ENCODE measurements at regions of chr3 and their contacts with region 1.

Region 1: GRCh38 chr3:112013058-112013783 is 14.5 kb downstream of the TAGLN3 start:
- DNase-seq: peak; percentile 66
- CTCF ChIP-seq: peak; percentile 76

Region 2: DNA sequence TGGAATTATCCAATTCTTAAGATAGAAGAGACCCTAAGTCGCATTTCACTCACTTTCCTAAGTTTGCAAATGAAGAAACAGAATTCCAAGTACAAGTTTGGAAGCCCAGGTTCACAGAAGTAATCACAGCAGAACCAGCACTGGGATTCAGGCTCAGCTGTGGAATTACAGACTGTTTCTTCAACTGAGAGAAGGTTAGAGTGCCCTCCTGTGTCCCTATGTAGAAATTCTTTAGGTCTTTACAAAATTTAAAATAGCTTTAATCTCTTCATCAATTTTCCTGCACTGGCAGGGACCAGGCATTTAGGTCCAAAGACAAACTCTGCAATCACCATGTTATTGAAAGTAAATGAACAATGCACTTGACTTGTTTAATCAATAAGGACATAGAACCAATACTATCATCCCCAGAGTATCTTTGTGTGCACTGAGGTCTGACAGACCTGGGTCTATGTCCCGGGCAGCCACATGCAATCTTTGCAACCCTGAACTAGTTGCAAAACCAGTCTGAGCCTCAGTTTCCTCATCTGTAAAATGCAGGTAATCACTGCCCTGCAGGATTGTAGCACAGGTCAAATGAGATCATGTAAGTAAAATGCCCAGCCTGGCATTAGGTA is 321.8 kb before region 1 on chr3:
- CTCF ChIA-PET with region 1: interaction called, 10 read pairs
- POLR2A ChIA-PET with region 1: no interaction called
- DNase-seq: peak; percentile 28
- CTCF ChIP-seq: peak; percentile 40

Region 3: DNA sequence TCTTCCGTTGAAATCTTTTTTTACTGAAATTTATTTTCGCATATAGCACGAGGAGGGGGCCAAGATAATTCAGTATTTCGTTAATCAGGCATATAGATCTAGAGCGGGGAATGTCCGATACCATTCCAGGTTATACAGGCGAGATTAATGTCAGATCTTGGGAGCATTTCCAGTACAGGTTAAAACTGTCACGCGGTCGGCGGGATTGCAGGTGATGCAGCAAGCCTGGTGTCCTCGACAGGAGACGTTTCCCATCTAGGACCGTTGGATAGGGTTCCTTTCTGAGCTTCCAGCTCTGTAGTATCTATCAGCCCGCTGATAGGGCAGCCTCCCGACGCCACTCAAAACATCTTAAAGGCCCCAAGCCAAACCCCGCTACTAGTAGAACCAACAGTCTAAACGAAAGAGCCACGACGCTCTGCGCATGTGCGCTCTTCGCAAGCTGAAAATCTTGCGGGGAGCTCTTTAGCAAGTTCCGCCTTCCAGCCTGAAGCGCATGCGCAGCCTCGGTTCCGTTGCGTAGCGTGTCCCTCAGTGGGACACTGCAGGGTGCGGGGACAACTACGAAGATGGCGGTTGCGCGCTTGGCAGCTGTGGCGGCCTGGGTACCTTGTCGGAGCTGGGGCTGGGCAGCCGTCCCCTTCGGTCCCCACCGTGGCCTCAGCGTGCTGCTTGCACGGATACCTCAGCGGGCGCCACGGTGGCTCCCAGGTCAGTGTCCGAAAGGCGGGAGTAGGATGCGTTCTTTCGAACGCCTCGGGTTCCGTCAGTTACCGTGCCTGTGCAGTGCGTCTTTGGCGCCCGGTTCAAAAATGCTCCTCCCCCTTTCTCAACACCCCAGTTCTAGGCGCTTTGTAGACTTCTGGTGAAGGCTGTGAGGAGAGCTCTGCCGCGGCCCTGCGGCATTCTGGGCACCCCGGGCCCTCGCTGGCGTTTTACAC is 34.5 kb before region 1 on chr3 and contains the start of gene ABHD10:
- CTCF ChIA-PET with region 1: interaction called, 25 read pairs
- POLR2A ChIA-PET with region 1: no interaction called
- DNase-seq: peak; percentile 92
- CTCF ChIP-seq: no peak

Region 4: DNA sequence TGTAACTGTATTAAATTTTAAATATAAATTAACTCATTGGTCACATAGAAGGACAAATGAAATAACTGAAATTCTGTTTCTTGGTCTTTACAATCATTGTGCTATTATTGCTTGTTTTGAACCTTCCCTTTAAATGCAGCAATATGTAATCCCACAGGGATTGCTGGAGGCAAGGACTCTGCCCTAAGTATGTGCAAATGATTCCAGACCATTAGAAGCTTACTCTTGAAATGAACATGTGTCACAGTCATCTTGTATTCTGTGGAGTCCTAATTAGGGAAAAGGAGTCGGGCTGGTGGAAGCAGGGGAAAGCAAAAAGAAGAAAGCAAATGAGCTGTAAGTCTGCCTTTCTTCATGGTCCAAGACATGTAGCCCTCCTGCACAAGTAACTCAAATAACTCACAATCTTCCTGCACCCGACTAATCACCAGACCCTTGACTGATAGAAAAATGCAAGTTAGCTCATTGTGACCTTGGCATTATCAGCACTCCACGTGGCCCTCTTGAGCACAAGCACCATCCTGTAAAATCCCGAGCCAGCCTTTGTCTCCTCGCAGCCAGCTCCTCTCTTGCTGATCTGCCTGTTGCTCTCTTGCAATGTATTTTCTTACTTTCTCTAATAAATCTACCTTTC is 19.0 kb after region 1 on chr3:
- CTCF ChIA-PET with region 1: interaction called, 16 read pairs
- POLR2A ChIA-PET with region 1: no interaction called
- DNase-seq: no peak
- CTCF ChIP-seq: no peak

Region 5: GRCh38 chr3:112253301-112253971 is 240.2 kb after region 1 on chr3:
- CTCF ChIA-PET with region 1: no interaction called
- POLR2A ChIA-PET with region 1: no interaction called
- DNase-seq: no peak
- CTCF ChIP-seq: no peak